B cell (primary cell): ENCODE measurements at regions of chr2 and their contacts with region 1.

Region 1: DNA sequence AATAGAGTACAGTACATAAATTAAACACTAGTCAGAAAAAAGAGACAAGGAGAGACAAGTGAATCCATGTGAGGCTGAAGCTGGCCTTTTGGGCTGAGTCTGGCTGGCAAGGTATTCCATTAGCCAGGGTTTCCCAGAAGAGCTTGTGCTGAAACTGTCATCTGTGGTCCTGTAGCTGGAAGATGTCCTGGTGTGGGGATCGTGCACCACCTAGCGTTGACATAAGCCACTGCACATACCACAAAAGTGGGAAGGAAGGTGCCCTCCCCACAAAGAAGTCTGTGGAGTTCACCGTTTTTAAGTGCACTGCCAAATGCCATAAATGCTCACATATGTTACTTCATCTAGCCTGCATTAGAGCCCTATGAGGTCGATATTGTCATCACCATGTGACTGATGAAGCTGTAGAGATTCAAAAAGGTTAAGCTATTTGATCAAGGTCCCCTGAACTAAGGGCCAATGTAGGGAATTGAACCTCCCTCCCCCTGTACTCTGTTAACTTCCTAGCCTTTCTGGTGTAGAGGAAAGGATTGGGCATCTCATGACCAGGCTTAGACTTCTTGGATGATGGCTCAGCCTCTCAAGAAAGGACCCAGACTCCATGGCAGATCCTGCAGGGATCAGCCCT is 31.9 kb upstream of the GALNT14 start:
- DNase-seq: peak; percentile 74
- ATAC-seq: peak; percentile 94
- H3K4me3 ChIP-seq: no peak overlapping the region
- H3K4me3 Mint-ChIP-seq: no peak overlapping the region
- H3K27ac ChIP-seq: no peak overlapping the region
- H3K27ac Mint-ChIP-seq: peak overlapping the region; percentile 43
- H3K4me1 ChIP-seq: peaks cover 9 to 20% of the 10 kb centered on the region in 2 donors
- H3K4me1 Mint-ChIP-seq: peaks cover 27% of the 10 kb centered on the region
- H3K27me3 ChIP-seq: no peaks in the 10 kb centered on the region
- H3K27me3 Mint-ChIP-seq: peaks cover under 1% of the 10 kb centered on the region
- CTCF ChIP-seq: peak; percentile 95

Region 2: DNA sequence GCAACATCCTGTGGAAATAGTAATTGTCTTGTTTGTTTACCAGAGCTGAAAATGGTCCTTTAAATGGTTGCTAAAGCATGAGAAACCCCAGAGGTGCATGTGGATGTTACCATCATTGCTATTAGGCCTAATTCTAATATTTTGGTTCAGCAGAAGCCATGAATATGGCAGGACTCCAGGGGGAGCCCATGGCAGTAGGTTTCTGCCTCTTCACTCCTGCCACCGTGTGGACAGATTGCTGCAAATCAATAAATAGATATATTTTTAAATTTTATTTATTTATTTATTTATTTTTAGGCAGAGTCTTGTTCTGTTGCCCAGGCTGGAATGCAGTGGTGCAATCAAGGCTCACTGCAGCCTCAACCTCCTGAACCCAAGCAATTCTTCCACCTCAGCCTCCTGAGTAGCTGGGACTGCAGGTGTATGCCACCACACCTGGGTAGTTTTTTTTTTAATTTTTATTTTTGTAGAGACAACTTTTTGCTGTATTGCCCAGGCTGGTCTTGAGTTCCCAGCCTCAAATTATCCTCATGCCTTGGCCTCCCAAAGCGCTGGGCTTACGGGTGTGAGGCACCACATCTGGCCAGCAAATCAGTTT is 308.0 kb before region 1 on chr2:
- CTCF ChIA-PET with region 1: interaction called, 39 read pairs
- POLR2A ChIA-PET with region 1: no interaction called
- intact Hi-C with region 1: loop called (anchors 1 kb)
- DNase-seq: peak; percentile 65
- ATAC-seq: peak; percentile 60
- H3K4me3 ChIP-seq: no peak overlapping the region
- H3K4me3 Mint-ChIP-seq: no peak overlapping the region
- H3K27ac ChIP-seq: no peak overlapping the region
- H3K27ac Mint-ChIP-seq: no peak overlapping the region
- H3K4me1 ChIP-seq: peaks cover 16% of the 10 kb centered on the region in 2 donors
- H3K4me1 Mint-ChIP-seq: peaks cover 17% of the 10 kb centered on the region
- H3K27me3 ChIP-seq: no peaks in the 10 kb centered on the region
- H3K27me3 Mint-ChIP-seq: peaks cover 9% of the 10 kb centered on the region
- CTCF ChIP-seq: peak; percentile 86

Region 3: GRCh38 chr2:31097962-31098613 is 72.1 kb before region 1 on chr2:
- CTCF ChIA-PET with region 1: no interaction called
- POLR2A ChIA-PET with region 1: no interaction called
- intact Hi-C with region 1: no loop called
- DNase-seq: no peak
- ATAC-seq: no peak
- H3K4me3 ChIP-seq: no peak overlapping the region
- H3K4me3 Mint-ChIP-seq: no peak overlapping the region
- H3K27ac ChIP-seq: no peak overlapping the region
- H3K27ac Mint-ChIP-seq: no peak overlapping the region
- H3K4me1 ChIP-seq: peaks cover 3 to 5% of the 10 kb centered on the region in 2 donors
- H3K4me1 Mint-ChIP-seq: peaks cover 10% of the 10 kb centered on the region
- H3K27me3 ChIP-seq: no peaks in the 10 kb centered on the region
- H3K27me3 Mint-ChIP-seq: no peaks in the 10 kb centered on the region
- CTCF ChIP-seq: no peak

Region 4: DNA sequence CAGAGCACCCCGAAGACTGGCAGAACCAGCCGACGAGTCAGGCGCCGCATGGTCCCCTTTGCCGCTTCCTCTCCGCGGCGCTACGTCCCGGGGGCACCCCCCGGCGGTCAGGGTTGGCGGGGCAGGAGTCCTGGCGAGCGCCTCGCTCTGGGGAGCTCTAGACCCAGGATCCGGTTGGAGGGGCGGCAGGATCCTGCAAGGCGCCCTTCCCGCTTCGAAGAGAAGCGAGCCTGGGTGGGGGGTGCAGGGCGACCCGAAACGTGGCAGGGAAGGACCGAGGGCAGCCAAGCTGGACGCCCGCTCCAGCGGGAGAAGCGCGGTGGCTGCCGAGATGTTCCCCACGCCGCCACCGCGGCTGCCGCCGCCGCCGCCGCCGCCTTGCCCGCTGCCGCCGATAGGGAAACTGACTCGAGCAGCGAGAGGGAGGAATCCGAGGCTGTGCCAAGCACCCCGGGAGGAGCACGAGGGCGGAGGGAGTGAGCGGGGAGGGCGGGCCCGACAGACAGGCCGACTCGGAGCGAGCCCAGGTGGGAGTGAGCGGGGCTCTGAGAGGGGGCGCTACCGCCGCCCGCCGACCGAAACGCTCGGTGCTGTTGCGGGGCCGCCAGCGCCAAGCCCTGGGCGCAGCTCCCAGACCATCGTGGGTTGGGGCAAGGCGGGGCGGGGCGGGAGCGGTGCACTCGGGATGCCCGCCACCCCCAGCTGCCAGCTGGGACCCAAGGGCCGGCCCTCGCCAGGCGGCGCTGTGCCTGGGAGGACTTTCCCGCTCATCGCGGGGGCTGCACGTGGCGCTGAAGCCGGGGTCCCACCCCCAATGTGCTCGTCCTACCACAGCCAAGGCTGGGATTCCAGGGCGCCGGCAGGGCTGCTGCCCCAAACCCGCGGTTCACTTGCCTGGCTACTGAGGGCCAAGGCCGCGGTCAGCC is 31.9 kb before region 1 on chr2 and contains the start of gene GALNT14:
- CTCF ChIA-PET with region 1: interaction called, 37 read pairs
- POLR2A ChIA-PET with region 1: no interaction called
- intact Hi-C with region 1: no loop called
- DNase-seq: peak; percentile 77
- ATAC-seq: peak; percentile 78
- H3K4me3 ChIP-seq: peak within 1 kb of the TSS; percentile 56 to 81 (median 60)
- H3K4me3 Mint-ChIP-seq: peak within 1 kb of the TSS; percentile 90
- H3K27ac ChIP-seq: no peak within 1 kb of the TSS
- H3K27ac Mint-ChIP-seq: peak within 1 kb of the TSS; percentile 26
- H3K4me1 ChIP-seq: peaks cover 15 to 16% of the 10 kb centered on the region in 2 donors
- H3K4me1 Mint-ChIP-seq: peaks cover 17% of the 10 kb centered on the region
- H3K27me3 ChIP-seq: peaks cover 0 to 11% (median 7%) of the 10 kb centered on the region in 4 experiments
- H3K27me3 Mint-ChIP-seq: peaks cover 21% of the 10 kb centered on the region
- CTCF ChIP-seq: peak; percentile 60
- total RNA-seq, gene GALNT14: 4.9 and 6.2 TPM in 2 replicates

Region 5: GRCh38 chr2:31219131-31219969 is 49.2 kb after region 1 on chr2:
- CTCF ChIA-PET with region 1: interaction called, 58 read pairs
- POLR2A ChIA-PET with region 1: no interaction called
- intact Hi-C with region 1: loop called (anchors 1 kb)
- DNase-seq: peak; percentile 87
- ATAC-seq: peak; percentile 77
- H3K4me3 ChIP-seq: peak overlapping the region in 4 of 5 experiments; percentile 2 to 33 (median 16)
- H3K4me3 Mint-ChIP-seq: peak overlapping the region; percentile 79
- H3K27ac ChIP-seq: peak overlapping the region; percentile 93 to 97
- H3K27ac Mint-ChIP-seq: peak overlapping the region; percentile 96
- H3K4me1 ChIP-seq: peaks cover 84 to 89% of the 10 kb centered on the region in 2 donors
- H3K4me1 Mint-ChIP-seq: peaks cover 93% of the 10 kb centered on the region
- H3K27me3 ChIP-seq: no peaks in the 10 kb centered on the region
- H3K27me3 Mint-ChIP-seq: no peaks in the 10 kb centered on the region
- CTCF ChIP-seq: no peak

Region 6: GRCh38 chr2:31255911-31256571 is 85.9 kb after region 1 on chr2:
- CTCF ChIA-PET with region 1: interaction called, 22 read pairs
- POLR2A ChIA-PET with region 1: interaction called, 7 read pairs
- intact Hi-C with region 1: loop called (anchors 2 kb)
- DNase-seq: peak; percentile 54
- ATAC-seq: peak; percentile 65
- H3K4me3 ChIP-seq: peak overlapping the region in 3 of 5 experiments; percentile 12 to 26 (median 22)
- H3K4me3 Mint-ChIP-seq: peak overlapping the region; percentile 83
- H3K27ac ChIP-seq: peak overlapping the region; percentile 51 to 60
- H3K27ac Mint-ChIP-seq: peak overlapping the region; percentile 96
- H3K4me1 ChIP-seq: peaks cover 78 to 86% of the 10 kb centered on the region in 2 donors
- H3K4me1 Mint-ChIP-seq: peaks cover 83% of the 10 kb centered on the region
- H3K27me3 ChIP-seq: no peaks in the 10 kb centered on the region
- H3K27me3 Mint-ChIP-seq: no peaks in the 10 kb centered on the region
- CTCF ChIP-seq: no peak

Region 7: GRCh38 chr2:31275976-31276375 is 105.8 kb after region 1 on chr2:
- CTCF ChIA-PET with region 1: no interaction called
- POLR2A ChIA-PET with region 1: no interaction called
- intact Hi-C with region 1: no loop called
- DNase-seq: no peak
- ATAC-seq: no peak
- H3K4me3 ChIP-seq: no peak overlapping the region
- H3K4me3 Mint-ChIP-seq: no peak overlapping the region
- H3K27ac ChIP-seq: no peak overlapping the region
- H3K27ac Mint-ChIP-seq: no peak overlapping the region
- H3K4me1 ChIP-seq: no peaks in the 10 kb centered on the region
- H3K4me1 Mint-ChIP-seq: peaks cover 7% of the 10 kb centered on the region
- H3K27me3 ChIP-seq: no peaks in the 10 kb centered on the region
- H3K27me3 Mint-ChIP-seq: peaks cover 5% of the 10 kb centered on the region
- CTCF ChIP-seq: no peak